ENCODE measurements at regions of chr10 and their contacts with region 1.

Region 1: GRCh38 chr10:90865401-90865800 is 6.4 kb upstream of the RPP30 start:
- DNase-seq: no peak
- H3K4me3 ChIP-seq: no peak overlapping the region
- H3K4me1 ChIP-seq: no peaks in the 10 kb centered on the region
- H3K27me3 ChIP-seq: peaks cover 28% of the 10 kb centered on the region

Region 2: GRCh38 chr10:90751107-90751997 is 114.0 kb before region 1 on chr10:
- in situ Hi-C with region 1: loop called (anchors 5 kb)
- DNase-seq: peak; percentile 39 to 65
- H3K4me3 ChIP-seq: no peak overlapping the region
- H3K4me1 ChIP-seq: peaks cover 6% of the 10 kb centered on the region
- H3K27me3 ChIP-seq: peaks cover 45% of the 10 kb centered on the region

Region 3: DNA sequence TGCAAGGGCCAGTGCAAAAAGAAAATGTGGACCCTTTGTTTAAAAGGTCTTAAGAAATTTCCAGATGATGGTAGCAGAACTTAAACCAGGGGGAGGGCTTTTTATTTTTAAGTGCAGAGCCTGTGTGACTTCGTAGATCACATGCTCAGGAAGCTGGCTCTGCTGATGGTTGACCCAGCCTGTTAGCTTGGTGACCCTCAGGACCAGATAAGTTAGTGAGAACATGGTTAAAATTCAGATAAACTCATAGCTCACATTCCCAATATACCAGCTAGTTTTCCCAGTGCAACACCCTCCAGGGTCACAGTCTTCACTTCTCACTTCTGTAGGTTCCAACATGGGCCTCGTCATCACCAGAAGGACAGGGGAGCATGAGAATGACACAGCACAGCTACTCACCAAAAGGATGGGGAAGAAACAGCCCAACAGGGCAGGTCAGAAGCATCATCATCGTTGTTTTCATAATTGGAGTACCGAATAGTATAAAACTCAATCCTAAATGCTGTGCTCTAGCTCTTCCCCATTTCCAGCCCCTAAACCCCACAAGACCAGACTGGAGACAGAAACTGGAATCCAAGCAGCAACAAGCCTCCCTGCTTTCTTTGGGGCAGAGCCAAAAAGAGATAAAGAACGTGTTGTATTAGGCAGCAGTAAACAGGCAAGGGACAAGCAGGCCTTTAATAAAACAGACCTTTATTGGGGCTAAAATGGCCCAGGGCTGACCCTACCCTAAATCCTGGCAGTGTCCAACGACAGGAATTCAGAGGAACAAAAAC is 157.7 kb after region 1 on chr10:
- in situ Hi-C with region 1: no loop called
- DNase-seq: no peak
- H3K4me3 ChIP-seq: no peak overlapping the region
- H3K4me1 ChIP-seq: no peaks in the 10 kb centered on the region
- H3K27me3 ChIP-seq: no peaks in the 10 kb centered on the region

Region 4: GRCh38 chr10:91071786-91072185 is 206.4 kb after region 1 on chr10:
- in situ Hi-C with region 1: no loop called
- DNase-seq: no peak
- H3K4me3 ChIP-seq: no peak overlapping the region
- H3K4me1 ChIP-seq: peaks cover 8% of the 10 kb centered on the region
- H3K27me3 ChIP-seq: no peaks in the 10 kb centered on the region